ENCODE measurements at regions of chr19 and their contacts with region 1.

Region 1: GRCh38 chr19:55301459-55302317 is 17.9 kb downstream of the BRSK1 start:
- DNase-seq: peak; percentile 96
- ATAC-seq: peak; percentile 95
- H3K4me3 Mint-ChIP-seq: peak overlapping the region; percentile 78
- H3K27ac Mint-ChIP-seq: peak overlapping the region; percentile 94
- H3K4me1 Mint-ChIP-seq: peaks cover 31% of the 10 kb centered on the region
- H3K27me3 Mint-ChIP-seq: peaks cover 3% of the 10 kb centered on the region

Region 2: DNA sequence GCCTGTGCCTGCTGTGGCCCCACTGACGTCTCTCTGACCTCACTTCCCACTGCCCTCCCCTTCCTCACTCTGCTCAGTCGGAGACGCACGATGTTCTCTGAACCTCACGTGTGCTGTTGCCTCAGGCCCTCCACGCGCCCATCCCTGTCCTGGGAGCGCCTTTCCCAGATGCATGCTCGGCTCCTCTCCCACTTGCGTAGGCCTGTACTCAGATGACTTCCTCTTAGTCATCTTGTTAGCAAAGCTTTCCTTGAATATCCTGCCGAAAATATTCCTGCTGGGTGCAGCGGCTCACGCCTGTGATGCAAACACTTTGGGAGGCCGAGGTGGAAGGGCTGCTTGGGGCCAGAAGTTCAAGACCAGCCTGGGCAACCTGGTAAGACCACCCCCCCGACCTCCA is 112.3 kb before region 1 on chr19:
- CTCF ChIA-PET with region 1: no interaction called
- DNase-seq: no peak
- ATAC-seq: no peak
- H3K4me3 Mint-ChIP-seq: no peak overlapping the region
- H3K27ac Mint-ChIP-seq: no peak overlapping the region
- H3K4me1 Mint-ChIP-seq: peaks cover 15% of the 10 kb centered on the region
- H3K27me3 Mint-ChIP-seq: peaks cover 6% of the 10 kb centered on the region

Region 3: DNA sequence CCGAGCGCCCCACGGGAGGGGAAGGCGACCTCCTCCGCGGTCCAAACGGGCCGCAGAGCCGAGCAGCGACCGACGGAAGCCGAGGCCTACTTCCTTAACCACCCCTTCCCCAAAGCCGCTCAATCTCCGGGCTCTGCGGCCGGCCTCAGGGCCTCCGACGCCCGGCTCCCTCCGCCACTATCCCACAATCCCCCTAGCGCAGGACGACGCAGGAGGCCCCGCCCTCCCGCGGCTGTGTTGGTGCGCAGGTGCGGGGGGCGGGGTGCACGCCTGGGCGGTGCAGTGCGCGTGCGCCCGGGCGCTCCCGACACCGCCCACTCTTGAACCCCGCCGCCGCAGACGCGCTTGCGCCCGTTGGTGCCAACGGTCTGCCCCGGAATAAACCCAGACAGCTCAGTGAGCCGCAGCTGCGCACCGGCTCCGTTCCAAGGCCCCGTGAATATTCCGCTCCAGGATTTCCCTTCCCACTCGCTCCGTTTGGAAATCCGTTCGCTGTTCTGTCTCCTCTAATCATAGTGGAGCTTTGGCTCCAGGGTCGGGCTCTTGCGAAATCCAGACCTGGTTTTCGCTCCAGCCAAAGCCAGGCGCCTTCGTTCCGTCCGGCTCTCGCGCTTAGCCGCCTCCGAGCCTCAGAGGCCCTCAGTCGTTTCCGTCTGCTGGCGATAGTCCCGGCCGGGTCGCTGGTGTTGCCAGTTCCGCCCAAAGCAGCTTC is 42.7 kb before region 1 on chr19 and contains the start of gene PPP6R1:
- CTCF ChIA-PET with region 1: interaction called, 16 read pairs
- DNase-seq: peak; percentile 96
- ATAC-seq: peak; percentile 81
- H3K4me3 Mint-ChIP-seq: peak within 1 kb of the TSS; percentile 99
- H3K27ac Mint-ChIP-seq: peak within 1 kb of the TSS; percentile 100
- H3K4me1 Mint-ChIP-seq: peaks cover 27% of the 10 kb centered on the region
- H3K27me3 Mint-ChIP-seq: no peaks in the 10 kb centered on the region
- total RNA-seq, gene PPP6R1: 263 to 291 TPM

Region 4: GRCh38 chr19:55289117-55289796 is 12.4 kb before region 1 on chr19:
- CTCF ChIA-PET with region 1: interaction called, 46 read pairs
- DNase-seq: no peak
- ATAC-seq: no peak
- H3K4me3 Mint-ChIP-seq: no peak overlapping the region
- H3K27ac Mint-ChIP-seq: no peak overlapping the region
- H3K4me1 Mint-ChIP-seq: peaks cover 8% of the 10 kb centered on the region
- H3K27me3 Mint-ChIP-seq: no peaks in the 10 kb centered on the region

Region 5: GRCh38 chr19:55319785-55320184 is 18.1 kb after region 1 on chr19:
- CTCF ChIA-PET with region 1: interaction called, 24 read pairs
- DNase-seq: no peak
- ATAC-seq: no peak
- H3K4me3 Mint-ChIP-seq: no peak overlapping the region
- H3K27ac Mint-ChIP-seq: no peak overlapping the region
- H3K4me1 Mint-ChIP-seq: peaks cover 16% of the 10 kb centered on the region
- H3K27me3 Mint-ChIP-seq: peaks cover 9% of the 10 kb centered on the region

Region 6: DNA sequence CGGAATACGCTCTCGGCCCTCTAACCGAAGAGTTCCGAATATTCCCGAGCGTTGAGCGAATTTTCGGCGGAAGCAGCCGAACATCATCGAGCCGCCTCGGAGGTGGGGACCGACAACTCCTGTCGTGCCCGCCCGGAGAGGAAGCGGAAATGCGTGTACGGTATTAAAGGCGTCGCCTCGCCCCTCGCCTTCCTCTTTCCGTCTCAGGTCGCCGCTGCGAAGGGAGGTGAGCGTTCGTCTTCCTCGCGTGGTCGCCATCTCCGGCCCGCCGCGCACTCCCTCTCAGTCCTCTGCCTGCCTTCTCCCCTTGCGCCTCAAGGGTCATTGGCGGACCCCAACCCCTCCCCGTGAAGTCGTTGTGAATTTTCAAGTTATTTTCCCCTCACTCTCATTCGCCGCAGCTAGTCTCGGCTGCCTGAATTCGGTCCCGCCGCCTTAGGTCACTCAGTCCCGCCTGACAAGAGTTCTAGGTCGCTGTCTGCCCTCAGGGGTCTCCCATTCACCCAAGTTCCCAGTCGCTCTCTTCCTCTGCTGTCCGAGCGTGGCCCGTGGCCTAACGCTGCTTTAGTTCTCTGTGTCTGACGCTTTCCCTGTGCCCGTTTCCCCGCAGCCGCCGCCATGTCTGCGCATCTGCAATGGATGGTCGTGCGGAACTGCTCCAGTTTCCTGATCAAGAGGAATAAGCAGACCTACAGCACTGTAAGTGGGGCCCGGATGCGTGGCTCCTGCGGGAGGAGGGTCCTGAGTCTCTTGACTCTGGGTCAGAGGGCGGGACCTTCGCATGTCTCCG is 84.2 kb after region 1 on chr19 and contains the start of gene RPL28:
- CTCF ChIA-PET with region 1: interaction called, 58 read pairs
- DNase-seq: peak; percentile 99
- ATAC-seq: peak; percentile 72
- H3K4me3 Mint-ChIP-seq: peak within 1 kb of the TSS; percentile 96
- H3K27ac Mint-ChIP-seq: peak within 1 kb of the TSS; percentile 96
- H3K4me1 Mint-ChIP-seq: peaks cover 61% of the 10 kb centered on the region
- H3K27me3 Mint-ChIP-seq: no peaks in the 10 kb centered on the region
- total RNA-seq, gene RPL28: 2,244 to 2,759 TPM